Posterior vena cava (tissue), 2 donors: ENCODE measurements at regions of chr1 and their contacts with region 1.

Region 1: GRCh38 chr1:6727535-6727934 is 25.9 kb upstream of the DNAJC11 start:
- DNase-seq: no peak

Region 2: DNA sequence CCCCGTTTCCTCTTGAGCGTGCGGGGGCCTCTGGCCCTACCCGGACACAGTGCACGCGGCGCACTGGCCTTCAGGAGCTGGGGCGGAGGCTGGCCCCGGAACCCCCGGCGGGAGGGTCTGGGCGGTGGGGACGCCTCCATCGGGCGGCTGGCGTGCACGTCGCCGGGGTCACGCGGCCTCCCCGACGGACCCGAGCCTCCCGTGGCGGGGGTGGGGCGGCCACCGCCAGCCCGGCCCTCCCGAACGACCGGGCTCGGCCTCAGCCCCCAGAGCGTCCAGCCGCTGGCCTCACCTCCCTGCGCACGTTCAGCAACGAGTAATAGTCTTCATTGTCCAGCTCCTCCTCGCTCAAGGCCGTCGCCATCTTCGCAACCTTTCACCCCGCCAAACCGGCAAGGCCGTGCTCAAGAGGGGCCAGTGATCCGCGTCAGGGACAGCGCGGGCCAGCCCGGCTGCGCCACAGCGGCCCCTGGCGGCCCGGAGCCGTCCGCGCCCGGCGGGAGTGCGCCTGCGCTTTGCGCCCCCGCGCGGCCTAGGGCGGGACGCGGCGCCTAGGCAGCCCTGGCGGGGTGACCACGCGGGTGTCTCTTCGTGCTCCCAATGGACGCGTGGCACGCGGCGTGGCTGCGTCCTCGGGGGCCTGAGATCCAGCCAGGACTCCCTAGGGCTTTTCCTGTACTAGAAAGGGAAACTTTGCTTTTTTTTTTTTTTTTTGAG is 25.9 kb before region 1 on chr1 and contains the start of gene DNAJC11:
- intact Hi-C with region 1: no loop called
- DNase-seq: peak; percentile 97
- total RNA-seq, gene DNAJC11: 24.6 TPM

Region 3: DNA sequence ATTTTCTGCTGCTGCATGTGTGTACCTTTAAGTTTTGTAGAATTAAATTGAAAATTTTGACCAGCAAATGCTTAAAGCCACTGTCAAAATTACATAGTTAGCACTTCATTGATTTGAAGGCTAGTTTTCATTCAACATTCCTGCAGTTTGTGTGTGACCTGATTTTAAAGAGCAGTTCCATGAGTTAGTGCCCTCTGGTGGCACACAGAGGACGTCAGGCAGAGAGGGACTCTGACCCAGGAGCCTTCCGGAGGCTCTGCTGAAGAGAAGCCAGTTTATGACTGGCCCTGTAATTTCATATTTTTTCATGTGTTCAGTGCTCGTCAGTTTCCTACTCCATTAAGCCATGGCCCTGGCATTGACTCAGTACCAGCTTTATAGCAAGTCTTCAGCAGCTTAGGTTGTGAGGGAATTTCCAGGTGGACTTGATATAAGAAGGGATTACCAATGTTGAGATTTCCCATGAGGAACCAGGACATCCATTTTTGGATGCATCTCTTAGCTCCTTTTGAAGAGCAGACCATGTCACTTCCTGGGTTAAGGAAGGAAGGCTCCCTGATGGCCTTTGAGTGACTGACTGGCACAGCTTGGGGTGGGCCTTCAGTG is 162.4 kb after region 1 on chr1:
- intact Hi-C with region 1: loop called (anchors 5 to 10 kb)
- DNase-seq: no peak

Region 4: GRCh38 chr1:7070389-7071029 is 343.0 kb after region 1 on chr1:
- intact Hi-C with region 1: loop called (anchors 5 to 10 kb)
- DNase-seq: peak; percentile 88

Region 5: DNA sequence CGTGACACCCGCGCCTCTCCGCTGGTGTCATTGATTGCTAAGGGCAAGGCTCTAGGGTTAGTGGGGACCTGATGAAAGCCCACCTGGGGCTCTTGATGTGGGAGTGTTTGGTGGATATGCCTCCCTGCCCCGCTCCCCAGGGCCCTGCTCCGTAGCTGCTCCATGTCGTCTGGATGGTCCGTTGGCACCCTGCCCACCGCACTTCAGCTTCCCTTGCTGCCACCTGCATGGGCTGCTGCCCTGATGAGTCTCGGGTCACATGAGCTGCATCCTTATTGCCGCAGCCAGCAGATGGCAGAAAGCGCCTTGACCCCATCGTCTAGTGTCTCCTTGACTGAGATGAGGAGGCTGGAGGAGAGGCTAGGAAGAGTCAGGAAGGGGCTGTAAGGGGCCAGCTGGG is 497.1 kb after region 1 on chr1:
- intact Hi-C with region 1: loop called in 1 of 2 experiments (anchors 10 kb)
- DNase-seq: no peak

Region 6: DNA sequence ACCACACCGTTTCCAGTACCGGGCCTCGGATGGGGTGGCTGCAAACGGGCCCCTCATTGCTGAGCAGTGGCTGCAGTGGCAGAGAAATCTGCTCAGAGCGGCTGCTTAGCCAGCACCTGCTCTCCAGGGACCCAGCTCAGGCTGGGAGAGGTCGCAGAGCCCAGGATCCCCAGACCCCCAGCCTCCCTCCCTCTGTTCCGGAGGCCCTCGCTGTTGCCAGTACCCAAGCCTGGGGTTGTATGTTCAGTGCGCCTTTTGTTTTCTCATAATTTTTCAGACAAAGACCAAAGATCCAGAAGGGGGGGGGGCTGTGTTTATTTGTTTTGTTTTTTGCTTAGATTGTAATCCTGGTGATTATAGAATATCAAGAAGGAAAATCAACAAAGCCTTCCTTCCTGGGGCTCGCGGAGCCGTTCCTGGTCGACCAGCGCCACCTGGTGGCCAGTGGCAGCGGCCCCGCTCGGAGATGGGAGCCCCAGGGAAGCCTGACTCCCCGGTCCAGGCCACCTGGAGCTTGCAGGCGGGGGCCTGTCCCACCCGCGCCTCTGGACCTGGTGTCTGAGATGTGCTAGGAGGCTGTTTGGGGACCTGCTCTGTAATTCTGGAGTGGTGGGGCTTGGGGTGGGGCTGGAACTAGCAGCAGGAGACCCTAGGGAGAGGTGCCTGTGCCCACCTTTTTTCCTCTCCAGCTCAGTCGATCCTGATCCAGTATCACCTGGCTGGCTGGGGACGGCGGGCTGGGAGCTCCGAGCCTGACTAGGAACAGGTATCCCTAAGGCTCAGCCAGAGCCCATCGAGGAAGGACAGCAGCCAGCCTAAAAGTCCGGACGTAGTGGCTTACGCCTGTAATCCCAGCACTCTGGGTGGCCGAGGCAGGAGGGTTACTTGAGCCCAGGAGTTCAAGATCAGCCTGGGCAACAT is 919.7 kb after region 1 on chr1:
- intact Hi-C with region 1: loop called (anchors 5 to 10 kb)
- DNase-seq: peak; percentile 91